ENCODE measurements at regions of chr1 and their contacts with region 1.

Region 1: GRCh38 chr1:74468982-74469603 is 43.3 kb downstream of the LRRC53 start:
- DNase-seq: no peak
- ATAC-seq: peak in 2 of 4 donors; percentile 58 to 65
- H3K4me3 ChIP-seq: no peak overlapping the region
- H3K27ac ChIP-seq: peak overlapping the region in 8 of 12 donors; percentile 58 to 76 (median 69)
- H3K4me1 ChIP-seq: peaks cover 0 to 45% (median 23%) of the 10 kb centered on the region in 12 donors
- H3K27me3 ChIP-seq: no peaks in the 10 kb centered on the region
- CTCF ChIP-seq: peak; percentile 39 to 75 (median 61)
- POLR2A ChIP-seq: no peak

Region 2: GRCh38 chr1:74197657-74198552 is 271.2 kb before region 1 on chr1 and contains the starts of genes FPGT and LRRIQ3:
- intact Hi-C with region 1: loop called in 2 of 10 experiments (anchors 2 to 5 kb)
- DNase-seq: peak; percentile 95 to 99 (median 96)
- ATAC-seq: peak; percentile 99 to 100 (median 100)
- H3K4me3 ChIP-seq: peak within 1 kb of the TSS; percentile 56 to 86 (median 70)
- H3K27ac ChIP-seq: peak within 1 kb of the TSS; percentile 19 to 93 (median 82)
- H3K4me1 ChIP-seq: peaks cover 0 to 20% (median 11%) of the 10 kb centered on the region in 12 donors
- H3K27me3 ChIP-seq: no peaks in the 10 kb centered on the region
- CTCF ChIP-seq: no peak
- POLR2A ChIP-seq: peak in 1 of 2 donors; percentile 84
- total RNA-seq, gene FPGT: 7.8 to 22.5 (median 11.8) TPM
- total RNA-seq, gene LRRIQ3: 0.07 to 1.5 (median 0.56) TPM

Region 3: GRCh38 chr1:74236440-74236839 is 232.7 kb before region 1 on chr1:
- intact Hi-C with region 1: loop called in 2 of 10 experiments (anchors 10 kb)
- DNase-seq: no peak
- ATAC-seq: peak in 3 of 4 donors; percentile 47 to 51 (median 51)
- H3K4me3 ChIP-seq: peak overlapping the region; percentile 2 to 57 (median 44)
- H3K27ac ChIP-seq: peak overlapping the region; percentile 11 to 84 (median 68)
- H3K4me1 ChIP-seq: no peaks in the 10 kb centered on the region
- H3K27me3 ChIP-seq: no peaks in the 10 kb centered on the region
- CTCF ChIP-seq: no peak
- POLR2A ChIP-seq: no peak

Region 4: GRCh38 chr1:74245168-74245772 is 223.8 kb before region 1 on chr1:
- intact Hi-C with region 1: loop called in 2 of 10 experiments (anchors 5 to 10 kb)
- DNase-seq: no peak
- ATAC-seq: peak; percentile 40 to 75 (median 57)
- H3K4me3 ChIP-seq: peak overlapping the region in 2 of 12 donors; percentile 2 to 10
- H3K27ac ChIP-seq: peak overlapping the region; percentile 10 to 82 (median 62)
- H3K4me1 ChIP-seq: peaks cover 0 to 25% (median 0%) of the 10 kb centered on the region in 12 donors
- H3K27me3 ChIP-seq: no peaks in the 10 kb centered on the region
- CTCF ChIP-seq: no peak
- POLR2A ChIP-seq: no peak

Region 5: DNA sequence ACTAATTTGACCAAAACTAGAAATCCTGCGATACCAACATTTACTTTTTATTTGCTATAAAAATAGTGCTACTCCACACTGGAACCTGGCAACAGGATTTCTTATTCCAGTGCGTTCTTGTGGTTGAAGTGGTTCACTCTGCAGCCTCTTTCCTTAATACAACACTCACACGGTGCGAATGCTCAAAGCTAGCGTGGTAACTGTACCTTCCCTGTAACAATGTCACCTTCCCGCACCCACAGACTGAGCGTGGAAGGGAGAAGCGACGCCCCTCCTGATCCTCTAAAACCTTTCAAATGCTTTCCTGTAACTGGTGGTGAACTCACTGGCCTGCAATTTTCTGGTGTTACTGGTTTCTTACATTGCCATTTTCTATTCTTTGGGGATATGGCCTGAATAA is 88.8 kb before region 1 on chr1:
- intact Hi-C with region 1: loop called in 1 of 10 experiments (anchors 10 kb)
- DNase-seq: no peak
- ATAC-seq: peak; percentile 42 to 76 (median 74)
- H3K4me3 ChIP-seq: no peak overlapping the region
- H3K27ac ChIP-seq: peak overlapping the region in 10 of 12 donors; percentile 7 to 56 (median 42)
- H3K4me1 ChIP-seq: peaks cover 0 to 34% (median under 1%) of the 10 kb centered on the region in 12 donors
- H3K27me3 ChIP-seq: no peaks in the 10 kb centered on the region
- CTCF ChIP-seq: no peak
- POLR2A ChIP-seq: no peak

Region 6: DNA sequence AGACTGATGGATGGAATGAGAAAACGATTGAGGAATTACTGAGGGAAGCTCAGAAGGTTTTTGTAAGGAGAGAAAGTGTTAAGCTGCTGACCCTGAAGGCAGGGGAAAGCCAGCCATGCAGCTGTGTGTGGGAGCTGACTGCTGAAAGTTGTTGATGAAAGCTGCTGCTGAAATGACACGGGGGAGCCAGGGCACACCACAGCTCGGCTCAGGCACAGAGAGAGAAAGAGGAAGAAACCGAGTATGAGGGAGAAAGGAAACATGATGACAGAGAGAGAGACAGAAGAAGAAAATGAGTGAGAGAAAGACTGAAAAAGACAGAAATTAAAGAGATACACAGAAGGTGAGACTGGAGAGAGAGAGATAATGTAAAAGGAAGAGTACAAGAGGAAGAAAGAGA is 72.2 kb before region 1 on chr1:
- intact Hi-C with region 1: no loop called
- DNase-seq: peak; percentile 27 to 69 (median 57)
- ATAC-seq: peak; percentile 44 to 68 (median 57)
- H3K4me3 ChIP-seq: no peak overlapping the region
- H3K27ac ChIP-seq: peak overlapping the region; percentile 25 to 69 (median 56)
- H3K4me1 ChIP-seq: peaks cover 0 to 54% (median 25%) of the 10 kb centered on the region in 12 donors
- H3K27me3 ChIP-seq: no peaks in the 10 kb centered on the region
- CTCF ChIP-seq: no peak
- POLR2A ChIP-seq: no peak

Measured in heart left ventricle (tissue), 16 donors.